ENCODE measurements at regions of chr1 and their contacts with region 1.

Region 1: GRCh38 chr1:41496080-41497055 is 11.9 kb upstream of the EDN2 start:
- DNase-seq: peak; percentile 48
- H3K4me3 Mint-ChIP-seq: peak overlapping the region; percentile 46
- H3K27ac Mint-ChIP-seq: no peak overlapping the region
- H3K4me1 Mint-ChIP-seq: peaks cover 7% of the 10 kb centered on the region
- H3K27me3 Mint-ChIP-seq: peaks cover 50% of the 10 kb centered on the region

Region 2: GRCh38 chr1:41444246-41444645 is 52.1 kb before region 1 on chr1:
- CTCF ChIA-PET with region 1: no interaction called
- DNase-seq: no peak
- H3K4me3 Mint-ChIP-seq: no peak overlapping the region
- H3K27ac Mint-ChIP-seq: no peak overlapping the region
- H3K4me1 Mint-ChIP-seq: no peaks in the 10 kb centered on the region
- H3K27me3 Mint-ChIP-seq: peaks cover 25% of the 10 kb centered on the region

Region 3: GRCh38 chr1:41484372-41485241 is 11.8 kb before region 1 on chr1 and contains the start of gene EDN2:
- CTCF ChIA-PET with region 1: interaction called, 13 read pairs
- DNase-seq: no peak
- H3K4me3 Mint-ChIP-seq: no peak within 1 kb of the TSS
- H3K27ac Mint-ChIP-seq: no peak within 1 kb of the TSS
- H3K4me1 Mint-ChIP-seq: no peaks in the 10 kb centered on the region
- H3K27me3 Mint-ChIP-seq: peaks cover 66% of the 10 kb centered on the region

Region 4: GRCh38 chr1:41516168-41517061 is 20.0 kb after region 1 on chr1:
- CTCF ChIA-PET with region 1: interaction called, 15 read pairs
- DNase-seq: peak; percentile 70
- H3K4me3 Mint-ChIP-seq: no peak overlapping the region
- H3K27ac Mint-ChIP-seq: no peak overlapping the region
- H3K4me1 Mint-ChIP-seq: peaks cover 7% of the 10 kb centered on the region
- H3K27me3 Mint-ChIP-seq: no peaks in the 10 kb centered on the region

Region 5: DNA sequence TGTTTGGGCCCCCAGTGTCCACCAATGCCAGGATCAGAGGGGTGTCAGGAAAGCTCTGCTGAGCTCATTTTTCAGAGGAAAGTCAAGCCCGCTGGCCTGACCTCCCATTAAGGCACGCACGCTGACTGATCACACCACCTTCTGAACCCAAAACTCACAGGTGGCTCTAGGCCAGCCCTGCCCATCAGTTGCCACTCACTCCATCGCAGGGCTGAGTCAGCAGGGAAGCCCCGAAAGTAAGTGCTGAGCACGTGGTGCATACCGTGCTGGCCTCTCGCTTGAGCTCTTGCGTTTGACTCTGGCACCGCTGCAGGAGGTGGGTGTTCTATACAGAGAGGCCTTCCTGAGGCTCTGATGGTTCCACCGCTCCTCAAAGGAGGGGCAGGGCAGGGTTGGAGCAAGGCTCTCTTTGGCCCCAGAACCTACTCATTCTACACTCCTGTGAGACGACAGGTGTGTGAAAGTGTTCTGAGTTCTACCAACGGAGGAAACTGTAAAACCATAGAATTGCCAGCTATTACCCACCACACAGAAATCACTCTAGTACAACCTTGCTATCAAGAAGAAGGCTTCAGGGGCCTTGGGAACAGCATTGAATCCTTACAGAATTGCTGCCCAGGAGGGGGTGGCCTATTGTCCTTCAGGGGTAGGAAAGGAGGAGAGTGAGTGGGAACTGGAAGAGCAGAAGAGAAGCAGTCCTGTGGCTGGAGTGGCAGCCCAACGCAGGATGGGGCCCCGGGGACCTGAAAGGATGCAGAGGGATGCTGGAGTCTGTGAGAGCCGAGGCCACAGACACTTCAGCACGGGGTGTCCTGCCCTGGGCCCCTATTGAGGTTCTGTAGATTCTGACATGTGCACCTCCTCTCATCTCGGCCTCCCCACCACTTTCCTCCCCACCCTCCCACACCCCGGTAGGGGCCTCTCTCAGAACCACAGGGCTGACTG is 202.8 kb after region 1 on chr1:
- CTCF ChIA-PET with region 1: no interaction called
- DNase-seq: no peak
- H3K4me3 Mint-ChIP-seq: no peak overlapping the region
- H3K27ac Mint-ChIP-seq: no peak overlapping the region
- H3K4me1 Mint-ChIP-seq: no peaks in the 10 kb centered on the region
- H3K27me3 Mint-ChIP-seq: peaks cover 4% of the 10 kb centered on the region